Ascending aorta (tissue), 2 donors: ENCODE measurements at regions of chr16 and their contacts with region 1.

Region 1: DNA sequence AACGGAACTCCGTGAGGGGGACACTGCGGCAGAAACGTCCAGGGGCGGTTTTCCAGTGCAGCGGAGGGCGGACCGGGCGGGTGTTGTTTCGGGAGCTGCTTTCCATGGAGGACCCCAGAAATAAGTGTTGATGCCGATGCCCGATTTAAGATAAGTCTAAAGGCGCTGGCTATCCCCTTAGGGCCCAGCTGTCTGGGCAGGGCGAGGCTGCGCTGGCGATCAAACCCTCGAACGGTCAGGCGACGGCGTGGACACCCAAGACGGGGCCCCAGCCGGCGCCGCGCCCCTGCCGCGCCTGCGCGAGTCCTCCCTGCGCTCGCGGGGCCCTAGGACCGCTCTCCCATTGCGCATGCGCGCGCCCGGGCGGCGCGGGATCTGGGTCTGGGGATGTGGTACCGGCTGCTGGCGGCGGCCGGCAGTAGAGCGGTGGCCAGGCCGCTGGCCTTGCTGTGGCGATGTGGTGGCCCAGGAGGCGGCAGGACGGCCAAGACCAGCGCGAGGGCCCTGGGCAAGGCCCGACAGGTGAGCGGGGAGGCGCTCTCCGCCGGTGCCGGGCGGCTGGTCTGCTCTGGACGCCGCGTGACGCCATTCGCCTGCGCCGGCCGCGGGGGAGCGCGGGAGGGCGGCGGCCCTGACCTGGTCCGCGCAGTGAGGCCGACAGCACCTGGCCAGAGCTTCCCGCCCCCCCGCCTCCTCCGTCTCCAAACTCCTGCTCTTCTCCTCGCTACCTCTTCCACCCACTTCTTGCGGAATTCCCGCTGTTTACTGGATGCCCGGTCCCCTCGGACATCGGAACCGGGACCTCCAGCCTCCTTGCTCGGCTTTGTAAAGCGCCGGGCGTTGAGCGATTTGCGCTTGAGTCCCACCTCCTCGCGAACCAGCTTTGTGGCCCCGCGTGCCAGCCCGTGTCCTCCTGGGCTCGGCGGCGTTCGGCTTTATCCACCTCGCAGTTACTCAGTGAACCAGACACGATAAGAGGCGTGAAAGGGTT is 24.0 kb downstream of the DEF8 start:
- DNase-seq: peak; percentile 47 to 93
- H3K4me3 ChIP-seq: peak overlapping the region; percentile 81 to 87
- H3K27ac ChIP-seq: peak overlapping the region; percentile 93 to 94
- H3K4me1 ChIP-seq: peaks cover 11 to 13% of the 10 kb centered on the region in 2 donors
- H3K27me3 ChIP-seq: no peaks in the 10 kb centered on the region
- CTCF ChIP-seq: no peak

Region 2: GRCh38 chr16:88811769-88812512 is 1160.6 kb before region 1 on chr16 and contains the start of gene APRT:
- intact Hi-C with region 1: loop called (anchors 5 kb)
- DNase-seq: peak; percentile 65 to 96
- H3K4me3 ChIP-seq: peak within 1 kb of the TSS; percentile 80 to 83
- H3K27ac ChIP-seq: peak within 1 kb of the TSS; percentile 86 to 93
- H3K4me1 ChIP-seq: peaks cover 8 to 21% of the 10 kb centered on the region in 2 donors
- H3K27me3 ChIP-seq: no peaks in the 10 kb centered on the region
- CTCF ChIP-seq: peak in 2 of 3 experiments; percentile 41 to 44
- total RNA-seq, gene APRT: 305 TPM

Region 3: GRCh38 chr16:89922884-89923690 is 49.5 kb before region 1 on chr16 and contains the start of gene TUBB3:
- intact Hi-C with region 1: loop called (anchors 2 kb)
- DNase-seq: no peak
- H3K4me3 ChIP-seq: peak within 1 kb of the TSS; percentile 64 to 67
- H3K27ac ChIP-seq: peak within 1 kb of the TSS; percentile 85
- H3K4me1 ChIP-seq: peaks cover 25 to 40% of the 10 kb centered on the region in 2 donors
- H3K27me3 ChIP-seq: peaks cover 7% of the 10 kb centered on the region
- CTCF ChIP-seq: no peak
- total RNA-seq, gene TUBB3: 2.3 TPM

Region 4: DNA sequence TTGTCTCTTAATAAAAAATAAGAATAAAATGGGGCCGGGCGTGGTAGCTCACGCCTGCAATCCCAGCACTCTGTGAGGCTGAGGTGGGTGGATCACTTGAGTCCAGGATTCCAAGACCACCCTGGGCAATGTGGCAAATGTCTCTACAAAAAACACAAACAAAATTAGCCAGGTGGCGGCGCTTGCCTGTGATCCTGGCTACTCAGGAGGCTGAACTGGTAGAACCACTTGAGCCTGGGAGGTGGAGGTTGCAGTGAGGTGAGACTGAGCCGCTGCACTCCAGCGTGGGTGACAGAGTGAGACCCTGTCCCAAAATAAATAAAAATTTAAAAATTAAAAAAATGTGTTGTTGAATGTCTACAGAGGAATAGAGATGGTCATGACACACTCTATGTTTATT is 26.9 kb before region 1 on chr16:
- intact Hi-C with region 1: loop called (anchors 1 kb)
- DNase-seq: no peak
- H3K4me3 ChIP-seq: no peak overlapping the region
- H3K27ac ChIP-seq: no peak overlapping the region
- H3K4me1 ChIP-seq: peaks cover 9 to 15% of the 10 kb centered on the region in 2 donors
- H3K27me3 ChIP-seq: no peaks in the 10 kb centered on the region
- CTCF ChIP-seq: no peak